Panc1 (cell line): ENCODE measurements at regions of chr20 and their contacts with region 1.

Region 1: DNA sequence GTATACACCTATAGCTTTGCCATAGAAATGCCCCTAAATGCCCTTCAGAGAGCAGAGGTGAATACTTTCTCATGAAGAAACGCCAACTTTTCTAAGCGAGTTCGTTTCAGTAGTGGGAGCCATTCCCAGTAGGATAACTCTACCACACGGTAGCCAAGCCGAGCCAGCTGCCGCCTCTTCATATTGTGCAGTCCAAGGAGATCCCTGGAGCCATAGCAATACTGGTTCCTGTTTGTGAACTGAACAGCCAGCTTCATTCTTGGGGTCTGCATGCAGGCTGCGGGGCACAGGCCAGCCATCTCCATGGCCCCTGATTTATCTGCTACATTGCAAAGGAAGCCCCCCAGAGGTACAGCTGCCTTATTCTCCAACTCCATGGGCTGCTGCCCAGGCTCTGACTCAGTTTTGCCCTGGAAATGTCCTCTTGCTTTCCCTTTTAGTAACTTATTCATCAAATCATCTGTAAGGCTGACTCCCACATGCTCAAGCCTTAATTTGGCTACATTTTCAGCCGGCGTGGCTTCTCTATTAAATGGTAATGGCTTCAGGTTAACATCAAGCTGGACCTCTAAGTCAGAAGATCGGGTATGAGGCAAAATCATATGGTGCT is 12.8 kb downstream of the FASTKD5 start:
- DNase-seq: no peak
- ATAC-seq: no peak
- H3K4me3 ChIP-seq: no peak overlapping the region
- H3K27ac ChIP-seq: no peak overlapping the region
- H3K4me1 ChIP-seq: no peaks in the 10 kb centered on the region
- H3K27me3 ChIP-seq: no peaks in the 10 kb centered on the region
- CTCF ChIP-seq: no peak

Region 2: GRCh38 chr20:2485661-2486060 is 661.2 kb before region 1 on chr20:
- CTCF ChIA-PET with region 1: no interaction called
- POLR2A ChIA-PET with region 1: no interaction called
- in situ Hi-C with region 1: no loop called
- intact Hi-C with region 1: no loop called
- DNase-seq: no peak
- ATAC-seq: no peak
- H3K4me3 ChIP-seq: no peak overlapping the region
- H3K27ac ChIP-seq: no peak overlapping the region
- H3K4me1 ChIP-seq: no peaks in the 10 kb centered on the region
- H3K27me3 ChIP-seq: no peaks in the 10 kb centered on the region
- CTCF ChIP-seq: no peak

Region 3: GRCh38 chr20:3296261-3297078 is 149.6 kb after region 1 on chr20:
- CTCF ChIA-PET with region 1: no interaction called
- POLR2A ChIA-PET with region 1: no interaction called
- in situ Hi-C with region 1: no loop called
- intact Hi-C with region 1: no loop called
- DNase-seq: no peak
- ATAC-seq: no peak
- H3K4me3 ChIP-seq: no peak overlapping the region
- H3K27ac ChIP-seq: no peak overlapping the region
- H3K4me1 ChIP-seq: no peaks in the 10 kb centered on the region
- H3K27me3 ChIP-seq: no peaks in the 10 kb centered on the region
- CTCF ChIP-seq: no peak

Region 4: DNA sequence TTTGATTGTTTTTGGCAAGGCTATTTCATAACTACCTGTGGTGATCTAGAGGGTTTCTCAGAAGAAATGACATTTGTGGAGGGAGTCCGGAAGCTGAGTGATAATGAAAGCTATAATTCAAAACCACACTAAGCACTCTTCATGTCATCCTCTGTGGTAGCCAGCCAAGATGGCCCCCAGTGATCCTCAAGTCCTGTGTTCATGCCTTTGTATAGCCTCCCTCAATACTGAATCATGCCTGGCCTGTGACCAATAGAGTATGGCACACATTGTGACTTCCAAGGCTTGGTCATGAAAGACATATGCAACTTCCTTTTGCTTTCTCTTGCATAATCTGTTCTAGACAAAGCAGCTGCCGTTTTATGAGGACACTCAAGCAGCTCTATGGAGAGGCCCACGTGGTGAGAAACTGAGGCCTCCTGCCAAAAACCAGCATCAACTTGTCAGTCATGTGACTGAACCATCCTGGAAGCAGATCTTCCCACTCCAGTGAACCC is 273.4 kb after region 1 on chr20:
- CTCF ChIA-PET with region 1: no interaction called
- POLR2A ChIA-PET with region 1: no interaction called
- in situ Hi-C with region 1: no loop called
- intact Hi-C with region 1: loop called (anchors 5 kb)
- DNase-seq: no peak
- ATAC-seq: no peak
- H3K4me3 ChIP-seq: no peak overlapping the region
- H3K27ac ChIP-seq: no peak overlapping the region
- H3K4me1 ChIP-seq: no peaks in the 10 kb centered on the region
- H3K27me3 ChIP-seq: no peaks in the 10 kb centered on the region
- CTCF ChIP-seq: no peak